ENCODE measurements at regions of chr14 and their contacts with region 1.

Region 1: GRCh38 chr14:54572316-54572715 is 5.4 kb downstream of the SAMD4A start:
- DNase-seq: no peak
- ATAC-seq: no peak
- H3K4me3 ChIP-seq: no peak overlapping the region
- H3K27ac ChIP-seq: no peak overlapping the region
- H3K4me1 ChIP-seq: peaks cover 0 to 9% (median 0%) of the 10 kb centered on the region in 4 donors
- H3K27me3 ChIP-seq: no peaks in the 10 kb centered on the region
- CTCF ChIP-seq: peak; percentile 21 to 47 (median 38)
- POLR2A ChIP-seq: no peak

Region 2: DNA sequence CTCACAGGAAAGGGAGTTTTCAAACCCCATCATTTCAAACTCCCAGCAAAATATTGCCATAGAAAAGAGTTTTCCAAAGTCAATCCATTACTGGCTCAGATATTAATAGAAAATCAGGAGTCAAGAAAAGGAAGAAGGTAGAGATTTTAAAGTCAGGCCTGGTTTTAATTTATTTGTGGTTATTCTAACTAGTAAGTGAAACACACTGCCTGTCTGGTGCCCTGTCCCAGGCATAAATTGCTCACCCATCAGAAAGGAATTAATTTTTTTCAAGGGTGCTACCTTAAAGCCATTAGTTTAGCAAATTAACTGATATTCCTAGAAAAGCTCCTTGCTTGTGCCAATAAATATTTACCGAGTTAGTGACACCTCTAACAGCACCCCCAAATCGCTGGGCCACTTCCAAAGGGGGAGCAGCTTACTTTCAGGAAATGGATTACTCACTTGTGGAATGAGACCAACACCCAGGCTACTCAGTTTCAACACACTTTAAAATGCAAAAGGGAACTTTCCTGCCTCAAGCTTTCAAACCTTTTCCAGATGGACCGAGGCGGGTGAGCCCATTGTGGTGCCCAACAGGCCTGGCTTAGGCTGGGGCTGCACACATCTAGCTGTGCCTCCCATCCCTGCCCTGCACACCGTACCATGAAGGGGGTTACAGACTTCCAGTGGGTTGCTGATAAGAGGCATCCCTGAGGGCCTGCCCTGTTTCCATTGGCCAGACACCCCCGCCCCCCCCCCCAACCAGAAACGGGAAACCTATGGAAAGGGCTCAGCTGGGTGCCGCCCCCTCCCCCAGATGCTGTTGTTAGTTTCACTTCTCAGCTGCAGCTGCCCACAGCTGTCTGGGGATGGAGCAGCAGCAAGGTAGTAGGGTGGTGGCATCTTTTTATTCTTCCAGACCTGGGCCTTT is 111.8 kb after region 1 on chr14:
- intact Hi-C with region 1: loop called in 1 of 2 experiments (anchors 10 kb)
- DNase-seq: no peak
- ATAC-seq: peak in 2 of 4 donors; percentile 27 to 34
- H3K4me3 ChIP-seq: no peak overlapping the region
- H3K27ac ChIP-seq: no peak overlapping the region
- H3K4me1 ChIP-seq: no peaks in the 10 kb centered on the region
- H3K27me3 ChIP-seq: no peaks in the 10 kb centered on the region
- CTCF ChIP-seq: no peak
- POLR2A ChIP-seq: no peak

Measured in right lobe of liver (tissue), 6 donors.